Activated naive CD4-positive, alpha-beta T cell treated with anti-CD3 and anti-CD28 coated beads for 36 hours (primary cell): ENCODE measurements at regions of chr7 and their contacts with region 1.

Region 1: DNA sequence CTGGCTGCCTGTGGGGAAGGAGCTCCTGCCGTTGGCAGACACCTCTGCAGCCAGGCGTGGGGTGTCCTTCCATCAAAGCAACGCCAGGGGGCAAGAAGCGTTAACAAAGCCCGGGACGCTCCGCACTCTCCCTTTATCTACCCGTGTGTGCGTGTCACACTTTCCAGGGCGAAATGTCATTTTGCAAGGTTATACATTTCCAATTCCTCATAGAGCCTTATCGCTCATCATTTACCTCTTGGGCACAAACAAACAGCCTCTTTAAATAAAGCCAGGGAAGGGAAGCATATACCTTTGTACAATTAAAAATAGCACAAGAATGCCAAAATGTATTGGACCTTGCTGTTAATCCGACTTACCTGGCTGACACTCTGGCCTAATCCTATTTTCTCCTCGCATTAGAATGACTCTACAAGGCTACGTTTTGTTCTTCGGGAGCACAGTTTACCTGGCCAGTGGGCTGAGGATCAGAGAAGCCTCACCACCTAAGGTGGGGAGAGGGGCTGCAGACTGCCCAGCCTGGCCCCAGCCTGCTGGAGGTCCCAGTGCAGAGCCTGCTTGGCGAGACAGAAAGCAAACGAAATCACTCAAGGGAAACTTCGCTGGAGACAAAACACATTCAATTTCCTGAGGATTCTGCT is 77.6 kb upstream of the EN2 start:
- DNase-seq: peak; percentile 87
- H3K4me3 Mint-ChIP-seq: no peak overlapping the region
- H3K27ac Mint-ChIP-seq: no peak overlapping the region
- H3K4me1 Mint-ChIP-seq: peaks cover 29% of the 10 kb centered on the region
- H3K27me3 Mint-ChIP-seq: peaks cover 91% of the 10 kb centered on the region

Region 2: GRCh38 chr7:155426543-155427410 is 46.4 kb after region 1 on chr7:
- CTCF ChIA-PET with region 1: no interaction called
- intact Hi-C with region 1: no loop called
- DNase-seq: no peak
- H3K4me3 Mint-ChIP-seq: no peak overlapping the region
- H3K27ac Mint-ChIP-seq: no peak overlapping the region
- H3K4me1 Mint-ChIP-seq: no peaks in the 10 kb centered on the region
- H3K27me3 Mint-ChIP-seq: peaks cover 14% of the 10 kb centered on the region

Region 3: GRCh38 chr7:155456738-155457564 is 76.6 kb after region 1 on chr7:
- CTCF ChIA-PET with region 1: no interaction called
- intact Hi-C with region 1: loop called (anchors 2 kb)
- DNase-seq: peak; percentile 45
- H3K4me3 Mint-ChIP-seq: peak overlapping the region; percentile 63
- H3K27ac Mint-ChIP-seq: peak overlapping the region; percentile 18
- H3K4me1 Mint-ChIP-seq: peaks cover 22% of the 10 kb centered on the region
- H3K27me3 Mint-ChIP-seq: peaks cover 75% of the 10 kb centered on the region

Region 4: DNA sequence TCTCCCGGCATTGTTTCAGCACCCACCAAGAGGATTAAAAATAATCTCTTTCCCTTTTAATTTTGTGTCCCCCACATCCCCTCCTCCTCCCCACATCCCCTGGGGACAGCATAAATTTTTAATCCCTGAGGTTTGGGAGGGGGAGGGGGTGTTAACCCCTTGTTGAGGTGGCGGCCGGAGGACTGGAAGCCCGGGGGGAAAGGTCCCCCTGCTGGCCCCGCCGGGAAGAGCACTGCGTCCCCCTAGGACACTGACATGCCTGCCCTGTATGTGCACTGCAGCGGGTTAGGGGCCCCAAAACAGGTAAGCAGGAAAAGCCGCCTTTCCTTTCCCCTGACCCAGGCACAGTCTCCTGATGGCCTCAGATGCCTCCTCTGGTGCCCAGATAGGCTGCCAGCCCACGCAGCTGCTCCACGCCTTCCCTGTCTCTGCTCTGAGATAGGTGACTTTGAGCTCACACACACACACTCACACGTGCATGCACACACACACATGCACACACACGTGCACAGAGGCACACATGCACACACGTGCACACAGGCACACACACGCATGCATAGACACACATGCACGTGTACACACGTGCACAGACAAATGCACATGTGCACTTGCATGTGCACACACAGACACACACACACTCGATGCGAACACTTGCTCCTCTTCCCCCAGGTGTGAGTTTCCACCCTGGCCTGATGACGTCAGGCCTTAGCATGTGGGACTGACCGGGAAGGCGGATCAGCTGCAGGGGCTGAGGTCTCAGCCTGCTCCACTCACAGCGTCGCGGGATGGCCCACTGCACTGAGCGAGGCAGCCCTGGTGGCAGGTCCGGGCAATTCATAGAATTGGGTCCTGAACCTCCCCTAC is 153.7 kb after region 1 on chr7:
- CTCF ChIA-PET with region 1: interaction called, 17 read pairs
- intact Hi-C with region 1: loop called (anchors 2 kb)
- DNase-seq: peak; percentile 49
- H3K4me3 Mint-ChIP-seq: peak overlapping the region; percentile 6
- H3K27ac Mint-ChIP-seq: no peak overlapping the region
- H3K4me1 Mint-ChIP-seq: peaks cover 17% of the 10 kb centered on the region
- H3K27me3 Mint-ChIP-seq: peaks cover 69% of the 10 kb centered on the region

Region 5: DNA sequence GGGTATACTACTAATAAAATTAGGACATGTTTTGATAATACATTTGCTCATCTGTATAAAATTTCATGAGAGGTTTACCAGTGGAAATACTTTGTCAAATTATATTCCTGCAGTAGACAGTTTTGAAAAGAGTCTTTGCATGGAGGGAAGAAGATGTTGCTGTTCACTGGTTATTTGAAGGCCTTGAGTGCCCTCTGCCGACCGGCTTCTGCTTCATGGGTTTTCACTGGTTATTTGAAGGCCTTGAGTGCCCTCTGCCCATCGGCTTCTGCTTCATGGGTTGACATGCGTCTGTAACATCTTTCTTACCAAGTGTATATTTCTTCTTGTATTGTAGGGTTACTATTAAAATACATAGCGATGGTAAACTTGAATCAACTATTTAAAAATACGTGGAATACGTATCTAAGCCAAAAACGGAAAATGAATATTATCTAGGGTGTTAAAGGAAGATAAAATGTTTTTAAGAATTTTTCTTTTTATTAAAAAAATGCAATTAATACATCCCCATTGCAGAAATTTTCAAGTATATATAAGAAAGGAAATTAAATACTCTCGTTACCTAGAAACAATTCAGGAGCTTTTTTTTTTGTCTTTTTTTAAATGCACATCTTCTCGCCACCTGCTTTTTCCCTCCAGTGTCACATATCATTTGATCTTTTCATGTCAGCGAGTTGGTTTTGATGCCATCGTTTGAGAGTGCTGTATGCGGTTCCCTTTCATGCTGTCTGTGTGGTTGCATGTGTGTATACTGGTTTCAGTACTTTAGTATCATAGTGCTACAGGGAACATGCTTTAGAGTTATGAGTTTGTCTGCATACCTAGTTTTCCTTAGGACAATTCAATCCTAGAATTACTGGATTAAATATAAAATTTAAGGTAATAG is 358.6 kb after region 1 on chr7:
- CTCF ChIA-PET with region 1: no interaction called
- intact Hi-C with region 1: loop called (anchors 1 kb)
- DNase-seq: peak; percentile 87
- H3K4me3 Mint-ChIP-seq: no peak overlapping the region
- H3K27ac Mint-ChIP-seq: no peak overlapping the region
- H3K4me1 Mint-ChIP-seq: peaks cover 47% of the 10 kb centered on the region
- H3K27me3 Mint-ChIP-seq: no peaks in the 10 kb centered on the region

Region 6: DNA sequence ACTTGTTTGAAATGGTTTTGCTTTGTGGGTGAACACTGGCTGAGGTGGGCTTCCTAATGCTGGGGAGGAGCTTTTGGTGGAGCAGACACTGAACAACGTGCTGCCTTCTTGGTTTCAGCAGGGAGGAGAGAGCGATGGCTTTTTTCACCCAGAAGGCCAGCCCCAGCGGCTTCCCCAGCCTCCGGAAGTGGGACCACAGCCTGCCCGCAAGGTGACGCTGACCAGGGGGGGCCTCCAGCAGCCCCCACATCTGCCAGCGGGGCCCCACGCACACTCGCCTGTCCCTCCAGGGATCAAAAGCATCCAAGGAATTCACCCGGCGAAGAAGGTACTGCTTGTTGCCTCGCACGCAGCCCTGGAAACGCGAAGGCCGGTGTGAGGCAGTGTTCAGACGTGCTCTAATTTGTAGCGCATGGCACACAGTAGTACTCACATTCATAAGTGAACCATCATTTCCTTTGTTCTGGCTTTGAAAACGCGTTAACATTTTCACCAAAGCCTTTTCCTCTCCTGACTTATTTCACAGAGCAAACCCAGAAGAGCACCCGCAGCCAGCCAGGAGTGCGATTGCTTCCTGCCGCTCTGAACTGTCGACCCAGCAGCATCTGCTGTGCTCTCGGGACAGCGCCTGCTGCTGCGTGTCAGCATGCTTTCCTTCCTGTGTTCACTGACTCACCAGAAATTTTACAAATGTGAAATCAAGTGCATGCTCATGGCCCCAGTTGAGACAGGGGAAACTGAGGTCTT is 383.5 kb after region 1 on chr7:
- CTCF ChIA-PET with region 1: no interaction called
- intact Hi-C with region 1: loop called (anchors 1 kb)
- DNase-seq: peak; percentile 82
- H3K4me3 Mint-ChIP-seq: peak overlapping the region; percentile 70
- H3K27ac Mint-ChIP-seq: peak overlapping the region; percentile 95
- H3K4me1 Mint-ChIP-seq: peaks cover 42% of the 10 kb centered on the region
- H3K27me3 Mint-ChIP-seq: no peaks in the 10 kb centered on the region

Region 7: GRCh38 chr7:157004050-157004838 is 1623.9 kb after region 1 on chr7:
- CTCF ChIA-PET with region 1: no interaction called
- intact Hi-C with region 1: loop called (anchors 2 kb)
- DNase-seq: no peak
- H3K4me3 Mint-ChIP-seq: no peak overlapping the region
- H3K27ac Mint-ChIP-seq: no peak overlapping the region
- H3K4me1 Mint-ChIP-seq: peaks cover 28% of the 10 kb centered on the region
- H3K27me3 Mint-ChIP-seq: peaks cover 74% of the 10 kb centered on the region